Gastrocnemius medialis (tissue), 4 donors: ENCODE measurements at regions of chr1 and their contacts with region 1.

Region 1: DNA sequence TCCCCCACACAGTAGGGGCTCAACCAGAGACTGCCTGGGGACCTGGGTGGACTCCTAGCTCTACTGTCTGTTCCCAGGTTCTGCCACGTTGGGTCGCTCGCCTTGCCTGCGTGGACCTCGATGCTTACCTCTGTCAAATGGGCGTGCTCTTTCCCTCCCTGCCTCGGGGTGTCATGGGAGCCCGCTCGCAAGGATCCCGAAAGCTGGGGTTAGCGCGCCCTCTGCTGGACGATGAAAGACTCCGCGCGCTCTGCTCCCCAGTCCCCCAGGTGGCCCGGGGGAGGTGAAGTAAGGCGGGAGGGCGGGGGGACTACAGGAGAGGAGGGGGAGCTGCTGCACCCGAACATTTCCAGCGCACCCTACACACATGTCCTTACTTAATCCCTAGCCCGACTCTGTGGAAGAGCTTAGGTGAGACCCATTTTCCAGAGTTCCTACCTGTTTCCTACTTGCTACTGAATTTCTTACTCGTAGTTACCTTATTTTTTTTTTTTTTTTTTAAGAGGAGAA is 2.3 kb upstream of the BSND start:
- DNase-seq: peak; percentile 32 to 46
- ATAC-seq: peak; percentile 72 to 85
- H3K4me3 ChIP-seq: no peak overlapping the region
- H3K27ac ChIP-seq: no peak overlapping the region
- H3K4me1 ChIP-seq: peaks cover 0 to 6% of the 10 kb centered on the region in 2 donors
- H3K27me3 ChIP-seq: peaks cover 13 to 16% (median 16%) of the 10 kb centered on the region in 3 donors
- CTCF ChIP-seq: peak; percentile 58 to 89 (median 81)
- POLR2A ChIP-seq: no peak

Region 2: DNA sequence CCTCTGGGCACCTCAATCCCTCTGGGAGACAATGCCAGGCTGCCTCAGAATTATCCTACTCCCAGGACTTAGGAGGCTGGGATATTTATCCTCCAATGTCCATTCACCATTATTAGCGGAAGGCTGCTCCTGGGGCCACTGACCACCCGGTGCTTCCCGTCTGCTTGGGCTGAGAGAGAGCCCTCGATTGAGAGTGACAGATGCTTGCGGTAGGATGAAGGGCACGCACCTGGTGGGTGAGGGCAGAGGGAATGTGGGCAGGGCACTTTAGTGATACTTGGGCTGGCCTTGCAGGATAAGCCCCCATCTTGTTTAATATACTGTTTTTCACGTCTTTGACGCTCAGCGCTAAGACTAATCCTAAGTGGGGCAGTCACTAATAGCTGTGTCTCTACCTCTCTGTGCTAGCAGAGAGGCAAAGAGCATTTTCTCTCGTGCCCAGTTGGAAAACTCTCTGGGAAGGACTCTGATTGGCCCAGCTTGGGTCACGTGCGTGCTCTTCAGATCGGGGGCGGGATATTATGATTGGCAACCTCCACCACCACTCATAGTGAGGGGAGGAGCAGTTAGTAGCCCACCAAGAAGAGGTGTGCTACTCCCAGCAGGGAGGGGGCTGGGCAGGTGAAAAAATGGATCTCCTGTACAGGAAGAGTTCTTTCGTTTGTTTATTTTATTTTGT is 221.5 kb before region 1 on chr1:
- in situ Hi-C with region 1: no loop called
- intact Hi-C with region 1: no loop called
- DNase-seq: no peak
- ATAC-seq: no peak
- H3K4me3 ChIP-seq: no peak overlapping the region
- H3K27ac ChIP-seq: no peak overlapping the region
- H3K4me1 ChIP-seq: no peaks in the 10 kb centered on the region
- H3K27me3 ChIP-seq: peaks cover 0 to 2% (median 0%) of the 10 kb centered on the region in 3 donors
- CTCF ChIP-seq: no peak
- POLR2A ChIP-seq: no peak

Region 3: DNA sequence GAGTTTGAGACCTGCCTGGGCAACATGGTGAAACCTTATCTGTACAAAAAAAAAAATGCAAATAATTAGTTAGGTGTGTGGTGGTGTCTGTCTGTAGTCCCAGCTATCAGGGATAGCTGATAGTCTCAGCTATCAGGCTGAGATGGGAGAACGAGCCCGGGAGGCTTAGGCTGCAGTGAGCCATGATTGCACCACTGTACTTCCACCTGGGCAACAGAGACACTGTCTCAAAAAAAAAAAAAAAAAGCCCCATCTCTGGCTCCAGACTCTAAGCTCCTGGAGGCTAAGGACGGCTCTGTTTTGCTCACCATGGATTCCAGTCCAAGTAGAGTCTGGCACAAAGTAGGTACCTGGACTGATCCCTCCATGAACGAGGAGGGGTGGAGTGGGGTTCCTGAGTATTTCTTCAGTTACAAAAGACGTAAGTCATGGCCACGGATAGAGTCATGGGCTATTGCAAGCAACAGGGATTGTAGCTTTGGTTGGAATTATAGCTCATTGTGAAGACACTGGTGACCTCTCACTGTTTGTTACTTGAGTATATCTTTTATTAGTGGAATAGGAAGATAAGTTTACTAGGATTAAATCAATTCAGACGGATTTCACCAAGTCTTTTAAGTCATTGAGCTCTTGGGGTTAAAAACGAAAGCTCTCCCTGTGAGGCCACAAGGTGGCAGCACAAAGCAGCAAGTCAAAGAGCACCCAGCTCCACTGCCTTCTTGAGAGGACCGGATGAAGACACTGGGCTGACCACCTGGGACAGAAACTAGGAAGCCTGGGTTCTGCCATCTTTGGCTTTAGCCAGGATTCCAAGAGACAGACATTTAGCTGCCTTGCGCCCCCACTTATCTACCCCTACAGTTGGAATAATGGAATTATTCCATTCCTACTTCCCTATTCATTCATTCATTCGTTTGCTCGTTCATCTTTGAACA is 51.5 kb before region 1 on chr1:
- in situ Hi-C with region 1: loop called (anchors 5 kb)
- intact Hi-C with region 1: loop called (anchors 1 kb)
- DNase-seq: peak; percentile 48 to 61
- ATAC-seq: peak; percentile 84 to 90
- H3K4me3 ChIP-seq: peak overlapping the region; percentile 20 to 44 (median 30)
- H3K27ac ChIP-seq: peak overlapping the region in 3 of 4 donors; percentile 45 to 66 (median 62)
- H3K4me1 ChIP-seq: peaks cover under 1 to 4% of the 10 kb centered on the region in 2 donors
- H3K27me3 ChIP-seq: no peaks in the 10 kb centered on the region
- CTCF ChIP-seq: peak; percentile 49 to 81 (median 72)
- POLR2A ChIP-seq: no peak

Region 4: GRCh38 chr1:54950369-54951163 is 45.8 kb before region 1 on chr1:
- in situ Hi-C with region 1: loop called (anchors 5 kb)
- intact Hi-C with region 1: loop called (anchors 1 kb)
- DNase-seq: peak; percentile 35 to 66
- ATAC-seq: peak; percentile 94 to 95
- H3K4me3 ChIP-seq: peak overlapping the region in 3 of 4 donors; percentile 35 to 48 (median 39)
- H3K27ac ChIP-seq: peak overlapping the region; percentile 23 to 75 (median 61)
- H3K4me1 ChIP-seq: peaks cover 5 to 7% of the 10 kb centered on the region in 2 donors
- H3K27me3 ChIP-seq: no peaks in the 10 kb centered on the region
- CTCF ChIP-seq: peak; percentile 51 to 88 (median 79)
- POLR2A ChIP-seq: no peak

Region 5: DNA sequence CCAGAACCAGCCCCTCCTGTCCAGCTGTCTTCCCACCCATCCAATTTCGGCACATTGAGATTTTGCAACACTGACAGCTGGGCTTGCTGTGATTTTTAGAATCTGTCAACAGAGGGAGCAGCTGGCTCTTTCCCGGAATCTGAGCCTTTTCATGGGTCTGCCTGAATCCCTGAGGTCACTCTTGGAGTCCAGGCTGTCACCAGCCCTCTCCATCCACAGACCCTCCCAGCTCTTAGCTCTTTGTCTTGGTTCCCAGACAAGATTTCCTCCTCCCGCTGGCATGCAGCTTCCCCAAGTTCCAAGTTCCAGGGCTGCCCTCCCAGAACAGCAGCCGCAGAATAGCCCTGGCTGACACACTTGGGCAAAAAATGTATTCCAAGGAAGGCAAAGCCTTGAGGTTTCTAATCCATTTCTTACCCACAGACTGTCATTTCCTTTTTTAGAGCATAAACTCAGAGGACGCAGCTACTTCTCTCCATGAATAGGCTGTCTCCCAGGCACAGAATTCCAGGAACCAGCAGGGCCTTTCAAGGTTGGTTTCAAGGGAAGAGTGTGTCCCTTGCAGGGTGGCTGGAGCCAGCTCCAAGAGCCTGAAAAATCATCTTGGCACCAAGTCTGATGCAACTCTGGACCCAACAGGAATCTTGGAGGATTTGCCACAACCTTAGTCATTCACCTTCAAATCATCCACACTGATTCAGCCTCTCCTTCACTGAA is 23.1 kb before region 1 on chr1:
- in situ Hi-C with region 1: no loop called
- intact Hi-C with region 1: loop called (anchors 1 kb)
- DNase-seq: peak; percentile 56 to 67
- ATAC-seq: peak; percentile 87 to 89
- H3K4me3 ChIP-seq: no peak overlapping the region
- H3K27ac ChIP-seq: peak overlapping the region; percentile 49 to 69 (median 53)
- H3K4me1 ChIP-seq: peaks cover 3 to 9% of the 10 kb centered on the region in 2 donors
- H3K27me3 ChIP-seq: no peaks in the 10 kb centered on the region
- CTCF ChIP-seq: peak in 1 of 5 experiments; percentile 24
- POLR2A ChIP-seq: no peak